CD4-positive, alpha-beta T cell (primary cell): ENCODE measurements at regions of chr3 and their contacts with region 1.

Region 1: GRCh38 chr3:89245612-89246011 is 138.2 kb downstream of the EPHA3 start:
- DNase-seq: no peak
- ATAC-seq: no peak
- H3K4me3 ChIP-seq: no peak overlapping the region
- H3K4me3 Mint-ChIP-seq: no peak overlapping the region
- H3K27ac ChIP-seq: no peak overlapping the region
- H3K27ac Mint-ChIP-seq: no peak overlapping the region
- H3K4me1 ChIP-seq: no peaks in the 10 kb centered on the region
- H3K4me1 Mint-ChIP-seq: no peaks in the 10 kb centered on the region
- H3K27me3 ChIP-seq: no peaks in the 10 kb centered on the region
- H3K27me3 Mint-ChIP-seq: no peaks in the 10 kb centered on the region
- CTCF ChIP-seq: no peak

Region 2: GRCh38 chr3:88343259-88343658 is 902.4 kb before region 1 on chr3:
- CTCF ChIA-PET with region 1: no interaction called
- POLR2A ChIA-PET with region 1: no interaction called
- intact Hi-C with region 1: no loop called
- DNase-seq: no peak
- ATAC-seq: no peak
- H3K4me3 ChIP-seq: no peak overlapping the region
- H3K4me3 Mint-ChIP-seq: no peak overlapping the region
- H3K27ac ChIP-seq: no peak overlapping the region
- H3K27ac Mint-ChIP-seq: no peak overlapping the region
- H3K4me1 ChIP-seq: no peaks in the 10 kb centered on the region
- H3K4me1 Mint-ChIP-seq: no peaks in the 10 kb centered on the region
- H3K27me3 ChIP-seq: no peaks in the 10 kb centered on the region
- H3K27me3 Mint-ChIP-seq: no peaks in the 10 kb centered on the region
- CTCF ChIP-seq: no peak

Region 3: GRCh38 chr3:89227218-89227617 is 18.4 kb before region 1 on chr3:
- CTCF ChIA-PET with region 1: no interaction called
- POLR2A ChIA-PET with region 1: no interaction called
- intact Hi-C with region 1: no loop called
- DNase-seq: no peak
- ATAC-seq: no peak
- H3K4me3 ChIP-seq: no peak overlapping the region
- H3K4me3 Mint-ChIP-seq: no peak overlapping the region
- H3K27ac ChIP-seq: no peak overlapping the region
- H3K27ac Mint-ChIP-seq: no peak overlapping the region
- H3K4me1 ChIP-seq: no peaks in the 10 kb centered on the region
- H3K4me1 Mint-ChIP-seq: no peaks in the 10 kb centered on the region
- H3K27me3 ChIP-seq: no peaks in the 10 kb centered on the region
- H3K27me3 Mint-ChIP-seq: no peaks in the 10 kb centered on the region
- CTCF ChIP-seq: no peak

Region 4: GRCh38 chr3:89289574-89290190 is 44.1 kb after region 1 on chr3:
- CTCF ChIA-PET with region 1: no interaction called
- POLR2A ChIA-PET with region 1: no interaction called
- intact Hi-C with region 1: loop called in 1 of 2 experiments (anchors 1 kb)
- DNase-seq: no peak
- ATAC-seq: no peak
- H3K4me3 ChIP-seq: no peak overlapping the region
- H3K4me3 Mint-ChIP-seq: no peak overlapping the region
- H3K27ac ChIP-seq: no peak overlapping the region
- H3K27ac Mint-ChIP-seq: no peak overlapping the region
- H3K4me1 ChIP-seq: no peaks in the 10 kb centered on the region
- H3K4me1 Mint-ChIP-seq: no peaks in the 10 kb centered on the region
- H3K27me3 ChIP-seq: no peaks in the 10 kb centered on the region
- H3K27me3 Mint-ChIP-seq: no peaks in the 10 kb centered on the region
- CTCF ChIP-seq: no peak

Region 5: DNA sequence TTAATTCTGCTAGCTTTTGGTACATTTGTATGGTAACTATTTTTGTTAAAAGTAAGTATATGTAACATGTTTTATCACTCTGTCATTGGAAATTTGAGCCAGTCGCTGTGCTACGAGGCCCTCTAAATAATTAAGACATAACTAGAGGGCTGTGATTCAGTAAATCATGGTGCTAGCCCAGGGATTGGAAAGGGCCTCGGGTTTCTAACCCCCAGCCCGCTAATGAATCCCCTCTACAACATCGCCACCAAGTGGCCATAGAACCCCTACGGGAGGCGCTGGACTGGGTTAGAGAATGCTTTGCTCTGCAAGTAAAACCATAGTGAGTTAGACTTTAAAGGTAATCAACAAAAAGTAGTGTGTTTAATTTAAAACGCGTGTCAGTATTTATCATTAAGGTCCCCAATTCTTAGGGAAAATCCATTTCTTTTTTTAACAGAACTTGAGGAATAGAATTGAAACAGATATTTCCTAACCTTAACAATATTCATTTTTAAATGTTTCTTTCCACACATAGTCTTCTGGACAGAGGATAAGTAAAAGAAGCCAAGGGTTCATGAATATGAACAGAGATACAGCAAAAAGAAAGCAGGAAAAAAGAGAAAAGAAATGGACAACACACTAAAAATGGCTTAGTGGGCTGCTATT is 606.5 kb after region 1 on chr3:
- CTCF ChIA-PET with region 1: no interaction called
- POLR2A ChIA-PET with region 1: no interaction called
- intact Hi-C with region 1: no loop called
- DNase-seq: no peak
- ATAC-seq: no peak
- H3K4me3 ChIP-seq: no peak overlapping the region
- H3K4me3 Mint-ChIP-seq: no peak overlapping the region
- H3K27ac ChIP-seq: no peak overlapping the region
- H3K27ac Mint-ChIP-seq: no peak overlapping the region
- H3K4me1 ChIP-seq: no peaks in the 10 kb centered on the region
- H3K4me1 Mint-ChIP-seq: no peaks in the 10 kb centered on the region
- H3K27me3 ChIP-seq: no peaks in the 10 kb centered on the region
- H3K27me3 Mint-ChIP-seq: no peaks in the 10 kb centered on the region
- CTCF ChIP-seq: no peak